ENCODE measurements at regions of chr1 and their contacts with region 1.

Region 1: GRCh38 chr1:52842643-52843309 is at the start of gene ZYG11A:
- DNase-seq: peak; percentile 50 to 78 (median 72)
- ATAC-seq: peak; percentile 97
- H3K4me3 ChIP-seq: peak within 1 kb of the TSS; percentile 23
- H3K4me3 Mint-ChIP-seq: peak within 1 kb of the TSS; percentile 60 to 78 (median 74)
- H3K27ac ChIP-seq: no peak within 1 kb of the TSS
- H3K27ac Mint-ChIP-seq: peak within 1 kb of the TSS in 1 of 9 donors; percentile 46
- H3K4me1 ChIP-seq: peaks cover 0 to 6% of the 10 kb centered on the region in 2 donors
- H3K4me1 Mint-ChIP-seq: peaks cover 0 to 9% (median 6%) of the 10 kb centered on the region in 7 donors
- H3K27me3 ChIP-seq: peaks cover 3 to 7% of the 10 kb centered on the region in 2 donors
- H3K27me3 Mint-ChIP-seq: peaks cover 33 to 38% (median 35%) of the 10 kb centered on the region in 5 donors
- total RNA-seq, gene ZYG11A: 0.07 to 0.27 (median 0.12) TPM in 3 of 5 experiments, not detected in the others

Region 2: GRCh38 chr1:52920791-52921291 is 78.1 kb after region 1 on chr1:
- CTCF ChIA-PET with region 1: no interaction called
- POLR2A ChIA-PET with region 1: no interaction called
- intact Hi-C with region 1: loop called (anchors 2 to 5 kb)
- DNase-seq: no peak
- ATAC-seq: no peak
- H3K4me3 ChIP-seq: peak overlapping the region; percentile 67
- H3K4me3 Mint-ChIP-seq: peak overlapping the region; percentile 65 to 89 (median 84)
- H3K27ac ChIP-seq: peak overlapping the region; percentile 74
- H3K27ac Mint-ChIP-seq: peak overlapping the region; percentile 51 to 86 (median 70)
- H3K4me1 ChIP-seq: peaks cover 0 to 12% of the 10 kb centered on the region in 2 donors
- H3K4me1 Mint-ChIP-seq: peaks cover 16 to 41% (median 31%) of the 10 kb centered on the region in 7 donors
- H3K27me3 ChIP-seq: no peaks in the 10 kb centered on the region
- H3K27me3 Mint-ChIP-seq: peaks cover 0 to 4% (median 0%) of the 10 kb centered on the region in 5 donors

Region 3: GRCh38 chr1:53135735-53136114 is 292.9 kb after region 1 on chr1:
- CTCF ChIA-PET with region 1: no interaction called
- POLR2A ChIA-PET with region 1: no interaction called
- intact Hi-C with region 1: no loop called
- DNase-seq: peak in 1 of 9 donors; percentile 2
- ATAC-seq: peak; percentile 63
- H3K4me3 ChIP-seq: no peak overlapping the region
- H3K4me3 Mint-ChIP-seq: no peak overlapping the region
- H3K27ac ChIP-seq: no peak overlapping the region
- H3K27ac Mint-ChIP-seq: no peak overlapping the region
- H3K4me1 ChIP-seq: peaks cover 0 to 20% of the 10 kb centered on the region in 2 donors
- H3K4me1 Mint-ChIP-seq: no peaks in the 10 kb centered on the region
- H3K27me3 ChIP-seq: no peaks in the 10 kb centered on the region
- H3K27me3 Mint-ChIP-seq: no peaks in the 10 kb centered on the region